ENCODE measurements at regions of chr3 and their contacts with region 1.

Region 1: DNA sequence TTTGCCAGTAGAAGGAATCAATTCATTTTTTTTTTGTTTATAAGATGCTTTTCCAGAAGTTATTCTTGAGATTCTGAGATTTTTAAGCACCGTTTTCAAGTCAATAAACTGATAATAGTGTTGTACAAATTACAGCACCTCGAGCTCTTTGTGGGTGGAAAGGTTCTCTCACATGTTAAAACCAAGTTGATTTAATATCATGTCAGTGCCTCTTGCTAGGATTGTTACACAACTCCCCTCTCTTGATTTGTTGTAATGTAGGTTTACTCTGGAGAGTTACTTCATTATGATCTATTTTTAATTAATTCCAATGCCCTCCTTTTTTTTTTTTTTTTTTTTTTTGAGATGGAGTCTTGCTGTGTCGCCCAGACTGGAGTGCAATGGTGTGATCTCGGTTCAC is 25.8 kb upstream of the UBXN7 start:
- DNase-seq: no peak
- H3K4me3 ChIP-seq: no peak overlapping the region
- H3K4me3 Mint-ChIP-seq: no peak overlapping the region
- H3K27ac ChIP-seq: no peak overlapping the region
- H3K27ac Mint-ChIP-seq: peak overlapping the region in 7 of 8 donors; percentile 30 to 86 (median 65)
- H3K4me1 ChIP-seq: no peaks in the 10 kb centered on the region
- H3K4me1 Mint-ChIP-seq: peaks cover 8 to 19% (median 11%) of the 10 kb centered on the region in 3 donors
- H3K27me3 ChIP-seq: no peaks in the 10 kb centered on the region
- H3K27me3 Mint-ChIP-seq: no peaks in the 10 kb centered on the region

Region 2: DNA sequence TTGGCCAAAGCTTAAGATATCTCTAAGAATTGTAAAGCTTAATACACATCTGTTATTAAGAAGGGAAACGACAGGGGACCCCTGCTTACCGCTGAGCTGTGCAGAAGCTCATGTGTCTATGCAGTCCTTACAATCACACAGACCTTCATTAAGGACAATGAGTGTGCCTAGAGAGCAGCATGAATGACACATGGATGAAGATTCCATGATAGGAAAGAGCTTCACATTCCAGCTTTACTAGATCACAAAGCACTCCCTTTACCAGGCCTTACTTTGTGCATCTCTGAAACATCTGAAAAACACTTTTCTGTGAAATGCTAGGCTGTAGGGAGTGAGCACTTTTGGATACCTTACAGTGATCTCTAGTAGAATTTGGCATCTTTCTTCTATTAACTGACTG is 13.5 kb after region 1 on chr3:
- CTCF ChIA-PET with region 1: interaction called, 5 read pairs
- POLR2A ChIA-PET with region 1: interaction called, 12 read pairs
- DNase-seq: no peak
- H3K4me3 ChIP-seq: no peak overlapping the region
- H3K4me3 Mint-ChIP-seq: no peak overlapping the region
- H3K27ac ChIP-seq: no peak overlapping the region
- H3K27ac Mint-ChIP-seq: peak overlapping the region in 1 of 8 donors; percentile 10
- H3K4me1 ChIP-seq: no peaks in the 10 kb centered on the region
- H3K4me1 Mint-ChIP-seq: peaks cover 12 to 25% (median 18%) of the 10 kb centered on the region in 3 donors
- H3K27me3 ChIP-seq: no peaks in the 10 kb centered on the region
- H3K27me3 Mint-ChIP-seq: no peaks in the 10 kb centered on the region

Region 3: GRCh38 chr3:196721097-196721496 is 263.0 kb after region 1 on chr3:
- CTCF ChIA-PET with region 1: no interaction called
- POLR2A ChIA-PET with region 1: no interaction called
- DNase-seq: no peak
- H3K4me3 ChIP-seq: no peak overlapping the region
- H3K4me3 Mint-ChIP-seq: no peak overlapping the region
- H3K27ac ChIP-seq: no peak overlapping the region
- H3K27ac Mint-ChIP-seq: no peak overlapping the region
- H3K4me1 ChIP-seq: no peaks in the 10 kb centered on the region
- H3K4me1 Mint-ChIP-seq: peaks cover 1 to 8% (median 4%) of the 10 kb centered on the region in 3 donors
- H3K27me3 ChIP-seq: no peaks in the 10 kb centered on the region
- H3K27me3 Mint-ChIP-seq: no peaks in the 10 kb centered on the region